Brain microvascular endothelial cell (primary cell): ENCODE measurements at regions of chr9 and their contacts with region 1.

Region 1: DNA sequence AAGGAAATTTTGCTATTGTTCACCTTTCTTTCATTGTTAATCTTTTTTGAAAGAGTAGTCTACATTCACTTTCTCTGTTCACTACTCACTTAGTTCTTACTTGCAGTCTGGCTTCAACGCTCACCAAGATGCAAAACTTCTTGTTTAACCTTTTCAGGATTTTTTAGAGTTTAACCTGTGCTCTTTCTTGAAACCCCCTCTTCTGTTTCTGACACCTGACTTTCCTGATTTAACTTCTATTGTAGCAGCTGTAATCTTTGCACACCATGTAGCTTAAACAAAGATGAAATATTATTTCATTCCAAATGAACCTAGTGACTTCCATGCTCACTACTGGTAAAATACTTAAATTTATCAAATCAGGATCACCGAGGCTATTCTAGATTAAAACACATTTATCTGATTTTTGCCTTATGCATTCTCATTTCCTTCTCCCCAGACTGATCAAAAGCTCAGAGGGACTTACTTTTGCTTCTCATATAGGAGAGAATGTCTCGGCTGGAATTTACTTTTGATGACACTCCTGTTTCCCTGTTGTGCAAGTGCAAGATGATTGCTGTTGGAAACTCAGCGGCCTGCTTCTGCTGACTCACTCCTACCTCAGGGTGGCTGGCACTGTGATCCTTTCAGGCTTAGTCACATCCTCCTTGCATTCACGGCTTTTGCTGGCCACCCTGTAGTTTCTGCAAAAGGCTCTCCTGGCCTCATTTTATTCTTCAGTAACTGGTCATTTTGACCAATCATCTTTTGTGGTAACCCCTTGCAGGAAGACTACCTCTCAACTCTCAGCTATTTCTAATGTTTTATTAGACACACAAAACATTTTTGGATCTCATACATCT is 109.3 kb upstream of the IFNE start:
- DNase-seq: peak; percentile 98
- H3K4me3 ChIP-seq: peak overlapping the region; percentile 12
- H3K27ac ChIP-seq: peak overlapping the region; percentile 68
- H3K27me3 ChIP-seq: no peaks in the 10 kb centered on the region
- CTCF ChIP-seq: no peak

Region 2: GRCh38 chr9:21294325-21294724 is 297.1 kb before region 1 on chr9:
- in situ Hi-C with region 1: no loop called
- DNase-seq: peak; percentile 29
- H3K4me3 ChIP-seq: no peak overlapping the region
- H3K27ac ChIP-seq: no peak overlapping the region
- H3K27me3 ChIP-seq: no peaks in the 10 kb centered on the region
- CTCF ChIP-seq: no peak

Region 3: GRCh38 chr9:21688108-21689102 is 97.0 kb after region 1 on chr9:
- in situ Hi-C with region 1: loop called (anchors 25 kb)
- DNase-seq: peak; percentile 53
- H3K4me3 ChIP-seq: peak overlapping the region; percentile 6
- H3K27ac ChIP-seq: peak overlapping the region; percentile 70
- H3K27me3 ChIP-seq: no peaks in the 10 kb centered on the region
- CTCF ChIP-seq: no peak